ENCODE measurements at regions of chr15 and their contacts with region 1.

Region 1: DNA sequence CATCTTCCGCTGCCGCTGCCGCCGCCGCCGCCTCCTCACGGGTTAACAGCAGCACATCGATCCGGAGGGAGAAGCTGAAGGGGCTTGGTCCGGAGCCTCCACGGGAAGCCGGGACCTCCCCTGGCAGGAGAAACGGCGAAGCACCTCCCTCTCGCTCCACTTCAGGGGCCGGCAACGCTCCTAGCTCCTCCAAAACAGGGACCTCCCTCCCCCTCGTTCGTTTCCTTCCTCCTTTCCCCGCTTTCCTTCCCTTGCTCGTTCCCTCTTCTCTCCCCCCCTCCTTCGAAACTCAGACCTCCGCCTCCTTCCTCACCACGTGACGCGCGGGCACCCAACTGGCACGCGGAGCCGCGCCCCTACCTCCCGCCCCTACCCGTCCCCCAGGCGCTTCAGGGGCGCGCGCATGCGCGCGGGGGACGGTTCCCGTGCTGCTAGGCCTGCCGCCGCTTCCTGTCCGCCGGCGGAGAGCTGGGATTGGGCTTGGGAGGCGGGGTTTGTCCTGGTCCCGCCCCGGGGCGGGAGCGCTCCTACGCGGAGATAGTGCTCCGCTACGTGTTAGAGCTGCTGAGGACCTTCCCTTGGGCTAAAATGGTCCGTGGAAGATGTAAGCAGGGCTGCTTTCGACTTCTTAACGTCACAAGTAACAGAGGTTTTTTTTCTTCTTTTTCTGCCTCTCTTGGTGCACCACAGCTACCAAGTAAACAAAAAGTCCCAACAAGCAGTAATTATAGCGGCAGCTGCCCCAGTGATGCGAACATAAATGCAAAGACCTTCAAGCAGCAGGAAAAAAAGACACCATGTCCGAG is at the start of gene ADAM10:
- DNase-seq: peak; percentile 99 to 100 (median 99)
- ATAC-seq: peak; percentile 93 to 99 (median 97)
- H3K4me3 ChIP-seq: peak within 1 kb of the TSS; percentile 73 to 98 (median 89)
- H3K27ac ChIP-seq: peak within 1 kb of the TSS; percentile 75 to 97 (median 90)
- H3K4me1 ChIP-seq: peaks cover 0 to 22% (median 10%) of the 10 kb centered on the region in 3 donors
- H3K27me3 ChIP-seq: no peaks in the 10 kb centered on the region
- CTCF ChIP-seq: no peak
- total RNA-seq, gene ADAM10: 30.6 to 96.2 (median 37.6) TPM

Region 2: DNA sequence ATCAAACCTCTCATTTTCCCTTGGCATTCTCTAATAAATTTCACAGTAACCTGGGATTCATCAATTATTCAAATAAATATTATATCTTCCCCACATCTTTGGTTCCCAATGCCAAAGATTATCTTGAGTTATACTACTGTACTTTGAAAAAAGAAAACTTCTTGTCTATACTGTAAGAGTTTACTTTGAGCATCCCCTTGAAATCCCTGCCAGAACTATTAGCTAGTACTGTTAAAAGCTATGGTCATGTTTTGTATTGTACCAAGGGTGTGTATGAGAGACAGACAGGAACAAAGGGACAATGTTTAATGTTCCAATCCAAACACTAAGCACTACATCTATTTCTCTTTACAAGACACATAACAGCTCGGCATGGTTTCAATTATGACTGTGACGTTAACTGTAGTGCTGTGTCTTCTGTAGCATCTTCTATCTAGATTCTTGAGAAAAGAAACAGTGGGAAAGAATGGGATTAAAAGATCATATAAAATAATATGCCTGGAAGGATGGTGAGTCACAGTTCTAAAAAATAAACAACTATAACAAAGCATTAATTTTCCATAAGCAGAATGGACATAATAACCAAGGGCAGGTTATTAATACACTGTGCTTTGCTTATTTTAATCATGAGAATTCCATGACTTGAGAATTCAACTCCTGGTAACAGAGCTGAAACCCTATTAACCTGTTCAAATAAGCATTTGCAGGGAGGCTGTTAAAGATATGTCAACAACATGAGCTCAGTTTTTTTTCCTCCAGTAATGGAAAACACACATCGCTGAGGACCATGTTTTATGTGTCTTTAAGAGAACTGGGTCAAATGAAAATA is 755.3 kb before region 1 on chr15:
- intact Hi-C with region 1: no loop called
- DNase-seq: no peak
- ATAC-seq: peak in 2 of 4 donors; percentile 21 to 61
- H3K4me3 ChIP-seq: no peak overlapping the region
- H3K27ac ChIP-seq: no peak overlapping the region
- H3K4me1 ChIP-seq: no peaks in the 10 kb centered on the region
- H3K27me3 ChIP-seq: no peaks in the 10 kb centered on the region
- CTCF ChIP-seq: no peak

Region 3: GRCh38 chr15:58269455-58270414 is 480.0 kb before region 1 on chr15:
- intact Hi-C with region 1: loop called in 1 of 3 experiments (anchors 10 kb)
- DNase-seq: peak in 3 of 6 donors; percentile 23 to 53 (median 28)
- ATAC-seq: peak; percentile 67 to 99 (median 96)
- H3K4me3 ChIP-seq: no peak overlapping the region
- H3K27ac ChIP-seq: peak overlapping the region in 1 of 4 donors; percentile 32
- H3K4me1 ChIP-seq: no peaks in the 10 kb centered on the region
- H3K27me3 ChIP-seq: no peaks in the 10 kb centered on the region
- CTCF ChIP-seq: peak in 3 of 4 donors; percentile 32 to 43 (median 34)

Region 4: GRCh38 chr15:58438956-58439355 is 310.8 kb before region 1 on chr15:
- intact Hi-C with region 1: loop called in 1 of 3 experiments (anchors 10 kb)
- DNase-seq: peak in 1 of 6 donors; percentile 43
- ATAC-seq: peak; percentile 28 to 61 (median 51)
- H3K4me3 ChIP-seq: no peak overlapping the region
- H3K27ac ChIP-seq: peak overlapping the region in 3 of 4 donors; percentile 61 to 93 (median 89)
- H3K4me1 ChIP-seq: peaks cover 12 to 33% (median 18%) of the 10 kb centered on the region in 3 donors
- H3K27me3 ChIP-seq: no peaks in the 10 kb centered on the region
- CTCF ChIP-seq: no peak

Region 5: DNA sequence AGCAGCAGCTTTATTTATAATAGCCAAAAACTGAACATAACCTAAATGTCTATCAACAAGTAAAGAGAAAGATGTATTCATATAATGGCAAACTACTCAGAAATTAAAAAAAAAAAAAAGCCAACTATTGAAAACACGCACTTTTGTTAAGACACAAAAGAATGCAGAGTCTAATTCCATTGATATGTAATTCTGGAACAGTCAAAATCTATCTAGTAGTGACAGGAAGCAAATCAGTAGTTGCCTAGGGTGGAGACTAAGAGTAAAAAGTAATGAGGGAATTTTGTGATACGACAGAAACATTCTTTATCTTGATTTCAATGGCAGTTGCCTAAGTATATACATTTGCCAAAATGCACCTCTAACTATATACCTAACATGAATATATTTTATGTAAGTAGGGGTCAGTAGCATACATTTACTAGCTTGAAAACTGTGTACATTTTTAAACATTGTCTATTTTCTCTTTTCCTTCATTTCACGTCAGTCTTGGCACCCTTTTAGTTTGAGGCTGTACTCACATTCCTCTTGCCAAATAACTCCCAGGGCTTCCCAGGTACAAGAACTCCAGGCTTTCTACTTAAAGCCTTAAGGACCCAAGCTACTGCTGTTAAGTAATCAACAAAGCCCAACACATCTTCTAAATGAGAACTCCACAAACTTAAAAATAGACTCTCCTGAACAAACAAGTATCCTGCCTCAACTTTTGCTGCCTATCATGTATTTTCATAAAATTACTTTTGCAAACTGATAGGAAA is 54.9 kb before region 1 on chr15:
- intact Hi-C with region 1: no loop called
- DNase-seq: no peak
- ATAC-seq: no peak
- H3K4me3 ChIP-seq: no peak overlapping the region
- H3K27ac ChIP-seq: no peak overlapping the region
- H3K4me1 ChIP-seq: no peaks in the 10 kb centered on the region
- H3K27me3 ChIP-seq: no peaks in the 10 kb centered on the region
- CTCF ChIP-seq: no peak

Measured in pancreas (tissue), 10 donors.